ENCODE measurements at regions of chr15 and their contacts with region 1.

Region 1: GRCh38 chr15:63718590-63719035 is 115.1 kb downstream of the HERC1 start:
- DNase-seq: no peak
- ATAC-seq: no peak
- H3K4me3 ChIP-seq: no peak overlapping the region
- H3K4me3 Mint-ChIP-seq: no peak overlapping the region
- H3K27ac ChIP-seq: no peak overlapping the region
- H3K27ac Mint-ChIP-seq: no peak overlapping the region
- H3K4me1 ChIP-seq: no peaks in the 10 kb centered on the region
- H3K4me1 Mint-ChIP-seq: peaks cover 5% of the 10 kb centered on the region
- H3K27me3 ChIP-seq: no peaks in the 10 kb centered on the region
- H3K27me3 Mint-ChIP-seq: no peaks in the 10 kb centered on the region
- CTCF ChIP-seq: no peak

Region 2: GRCh38 chr15:63573533-63573932 is 145.1 kb before region 1 on chr15:
- CTCF ChIA-PET with region 1: no interaction called
- POLR2A ChIA-PET with region 1: no interaction called
- intact Hi-C with region 1: no loop called
- DNase-seq: no peak
- ATAC-seq: no peak
- H3K4me3 ChIP-seq: no peak overlapping the region
- H3K4me3 Mint-ChIP-seq: no peak overlapping the region
- H3K27ac ChIP-seq: no peak overlapping the region
- H3K27ac Mint-ChIP-seq: peak overlapping the region; percentile 18
- H3K4me1 ChIP-seq: no peaks in the 10 kb centered on the region
- H3K4me1 Mint-ChIP-seq: peaks cover 23% of the 10 kb centered on the region
- H3K27me3 ChIP-seq: no peaks in the 10 kb centered on the region
- H3K27me3 Mint-ChIP-seq: no peaks in the 10 kb centered on the region
- CTCF ChIP-seq: no peak

Region 3: DNA sequence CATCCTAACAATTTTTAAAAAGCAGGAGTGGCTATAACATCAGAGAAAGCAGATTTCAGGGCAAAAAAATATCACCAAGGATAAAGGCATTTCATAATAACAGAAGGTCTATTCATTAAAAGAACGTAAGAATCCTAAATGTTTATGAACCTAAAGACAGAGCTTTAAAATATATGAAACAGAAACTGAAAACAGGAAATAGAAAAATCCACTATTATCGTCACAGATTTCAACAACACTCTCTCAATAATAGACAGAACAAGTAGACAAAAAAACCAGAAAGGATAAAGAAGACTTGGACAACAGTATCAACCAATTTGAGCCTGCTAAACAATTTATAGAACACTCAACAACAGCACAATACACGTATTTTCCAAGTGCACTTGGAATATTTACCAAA is 50.0 kb before region 1 on chr15:
- CTCF ChIA-PET with region 1: no interaction called
- POLR2A ChIA-PET with region 1: no interaction called
- intact Hi-C with region 1: no loop called
- DNase-seq: peak in 3 of 14 experiments; percentile 32 to 74 (median 45)
- ATAC-seq: peak; percentile 71
- H3K4me3 ChIP-seq: peak overlapping the region; percentile 36
- H3K4me3 Mint-ChIP-seq: peak overlapping the region; percentile 57
- H3K27ac ChIP-seq: peak overlapping the region; percentile 37 to 68
- H3K27ac Mint-ChIP-seq: peak overlapping the region; percentile 87
- H3K4me1 ChIP-seq: peaks cover 19% of the 10 kb centered on the region
- H3K4me1 Mint-ChIP-seq: peaks cover 54% of the 10 kb centered on the region
- H3K27me3 ChIP-seq: no peaks in the 10 kb centered on the region
- H3K27me3 Mint-ChIP-seq: no peaks in the 10 kb centered on the region
- CTCF ChIP-seq: no peak

Region 4: GRCh38 chr15:63708126-63708772 is 10.4 kb before region 1 on chr15:
- CTCF ChIA-PET with region 1: interaction called, 5 read pairs
- POLR2A ChIA-PET with region 1: interaction called, 12 read pairs
- intact Hi-C with region 1: no loop called
- DNase-seq: peak in 3 of 14 experiments; percentile 62 to 87 (median 67)
- ATAC-seq: peak; percentile 85
- H3K4me3 ChIP-seq: no peak overlapping the region
- H3K4me3 Mint-ChIP-seq: peak overlapping the region; percentile 2
- H3K27ac ChIP-seq: peak overlapping the region; percentile 41 to 80
- H3K27ac Mint-ChIP-seq: no peak overlapping the region
- H3K4me1 ChIP-seq: peaks cover 14% of the 10 kb centered on the region
- H3K4me1 Mint-ChIP-seq: peaks cover 26% of the 10 kb centered on the region
- H3K27me3 ChIP-seq: no peaks in the 10 kb centered on the region
- H3K27me3 Mint-ChIP-seq: no peaks in the 10 kb centered on the region
- CTCF ChIP-seq: no peak

Measured in CD4-positive, alpha-beta T cell (primary cell).